Activated naive CD4-positive, alpha-beta T cell treated with anti-CD3 and anti-CD28 coated beads for 36 hours (primary cell): ENCODE measurements at regions of chr14 and their contacts with region 1.

Region 1: DNA sequence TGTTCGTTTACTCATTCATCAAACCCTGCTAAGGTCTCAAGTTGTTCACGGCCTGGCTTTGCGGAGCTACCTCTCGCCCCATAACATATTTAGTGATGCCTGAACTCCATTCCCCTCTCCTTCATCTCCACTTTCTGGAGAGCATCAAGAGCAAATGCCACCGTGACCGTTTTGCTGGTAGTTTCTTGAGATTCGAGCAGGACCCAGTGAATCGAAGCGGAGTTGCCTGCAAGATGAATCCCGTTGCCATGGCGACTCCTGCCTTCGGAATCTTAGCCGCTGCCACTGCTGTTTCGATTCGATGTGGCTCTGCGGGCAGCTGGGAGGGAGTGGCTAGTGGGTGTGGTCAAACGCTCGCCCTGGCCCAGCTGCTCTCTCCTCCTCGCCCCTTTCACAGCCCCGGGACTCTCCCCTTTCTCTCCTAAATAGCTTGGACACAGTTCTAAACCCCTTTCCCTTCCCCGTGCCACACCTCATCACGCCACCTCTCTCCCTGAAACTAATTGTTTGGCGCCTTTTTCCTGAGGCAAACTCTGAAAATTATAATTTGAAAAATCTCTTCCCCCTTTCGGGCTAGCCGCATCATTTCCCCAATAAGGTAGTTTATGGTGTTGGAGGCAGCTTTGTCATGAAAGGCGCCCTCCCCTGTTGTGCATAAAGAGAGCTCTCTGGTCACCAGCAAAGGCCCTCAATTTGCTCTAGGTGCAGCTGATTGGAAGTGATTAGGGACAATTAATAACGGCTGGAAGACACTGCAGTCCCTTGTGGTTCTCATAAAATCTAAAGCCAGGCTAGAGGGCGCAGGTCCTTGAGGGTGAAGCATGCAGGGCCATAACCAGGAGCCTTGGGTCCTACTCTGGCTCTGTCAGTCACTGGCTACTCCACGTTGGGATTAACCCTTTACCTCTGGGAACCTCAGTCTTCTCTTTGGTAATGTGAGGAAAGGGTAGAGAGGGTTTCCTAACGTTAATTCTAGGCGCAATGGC is 1.6 kb downstream of the DAAM1 start:
- DNase-seq: peak; percentile 77
- H3K4me3 Mint-ChIP-seq: peak overlapping the region; percentile 91
- H3K27ac Mint-ChIP-seq: no peak overlapping the region
- H3K4me1 Mint-ChIP-seq: peaks cover 13% of the 10 kb centered on the region
- H3K27me3 Mint-ChIP-seq: no peaks in the 10 kb centered on the region

Region 2: DNA sequence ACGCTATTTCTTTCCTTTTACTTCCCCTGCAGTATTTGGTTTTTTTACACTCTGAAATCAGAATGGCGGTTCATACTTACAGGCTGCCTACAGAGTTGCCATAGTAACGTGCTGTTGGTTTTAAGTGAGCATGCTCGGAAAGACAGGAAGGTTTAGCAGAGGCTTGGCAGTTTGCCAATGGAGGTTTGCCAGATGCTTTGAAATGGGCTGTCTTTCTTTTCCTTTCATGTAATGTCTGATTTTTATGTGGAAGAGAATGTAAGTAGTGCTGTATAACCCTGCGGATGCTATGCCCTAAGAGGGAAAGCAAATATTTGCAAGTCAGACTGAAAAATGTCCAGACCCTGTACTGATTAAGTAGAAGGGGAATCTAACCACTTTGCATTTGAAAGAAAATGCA is 859.0 kb before region 1 on chr14:
- CTCF ChIA-PET with region 1: no interaction called
- intact Hi-C with region 1: loop called (anchors 5 kb)
- DNase-seq: peak; percentile 95
- H3K4me3 Mint-ChIP-seq: peak overlapping the region; percentile 73
- H3K27ac Mint-ChIP-seq: peak overlapping the region; percentile 83
- H3K4me1 Mint-ChIP-seq: peaks cover 20% of the 10 kb centered on the region
- H3K27me3 Mint-ChIP-seq: no peaks in the 10 kb centered on the region

Region 3: DNA sequence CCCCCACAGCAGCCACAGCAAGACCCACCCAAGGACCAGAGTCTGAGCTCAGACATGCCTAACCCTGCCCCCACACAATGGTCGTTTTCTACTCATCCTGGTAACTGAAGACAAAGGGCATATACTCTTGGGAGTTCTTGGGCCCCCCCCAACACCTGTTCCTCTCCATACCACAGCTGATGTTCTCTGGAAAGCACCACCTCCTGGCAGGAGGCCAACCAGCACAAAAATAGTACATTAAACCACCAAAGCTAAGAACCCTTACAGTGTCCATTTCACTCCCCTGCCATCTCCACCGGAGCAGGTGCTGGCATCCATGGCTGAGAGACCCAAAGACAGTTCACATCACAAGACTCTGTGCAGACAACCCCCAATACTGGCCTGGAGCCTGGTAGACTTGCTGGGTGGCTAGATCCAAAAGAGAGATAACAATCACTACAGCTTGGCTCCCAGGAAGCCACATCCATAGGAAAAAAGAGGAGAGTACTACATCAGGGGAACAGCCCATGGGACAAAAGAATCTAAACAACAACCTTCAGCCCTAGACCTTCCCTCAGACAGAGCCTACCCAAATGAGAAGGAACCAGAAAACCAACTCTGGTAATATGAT is 82.2 kb before region 1 on chr14:
- CTCF ChIA-PET with region 1: no interaction called
- intact Hi-C with region 1: no loop called
- DNase-seq: no peak
- H3K4me3 Mint-ChIP-seq: no peak overlapping the region
- H3K27ac Mint-ChIP-seq: no peak overlapping the region
- H3K4me1 Mint-ChIP-seq: no peaks in the 10 kb centered on the region
- H3K27me3 Mint-ChIP-seq: peaks cover 13% of the 10 kb centered on the region

Region 4: DNA sequence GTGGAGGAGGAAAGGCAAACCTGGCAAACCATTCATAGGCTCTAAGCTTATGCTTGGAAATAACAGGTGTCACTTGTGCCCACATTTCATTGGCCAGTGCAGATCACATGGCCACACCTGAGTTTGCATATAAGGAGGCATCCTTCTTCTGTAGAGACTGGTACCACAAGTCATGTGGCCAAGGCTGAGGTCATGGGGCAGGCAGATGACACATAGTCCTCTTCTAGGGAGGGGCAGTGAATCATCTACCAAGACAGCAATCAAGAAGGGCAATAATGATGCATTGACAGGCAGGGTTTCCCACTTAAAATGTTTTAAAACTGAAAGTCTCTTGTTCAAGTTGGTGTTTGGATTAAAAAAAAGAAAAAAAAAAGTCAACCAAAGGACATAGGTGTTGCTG is 75.7 kb after region 1 on chr14:
- CTCF ChIA-PET with region 1: no interaction called
- intact Hi-C with region 1: loop called (anchors 2 kb)
- DNase-seq: peak; percentile 49
- H3K4me3 Mint-ChIP-seq: no peak overlapping the region
- H3K27ac Mint-ChIP-seq: no peak overlapping the region
- H3K4me1 Mint-ChIP-seq: peaks cover 9% of the 10 kb centered on the region
- H3K27me3 Mint-ChIP-seq: no peaks in the 10 kb centered on the region

Region 5: DNA sequence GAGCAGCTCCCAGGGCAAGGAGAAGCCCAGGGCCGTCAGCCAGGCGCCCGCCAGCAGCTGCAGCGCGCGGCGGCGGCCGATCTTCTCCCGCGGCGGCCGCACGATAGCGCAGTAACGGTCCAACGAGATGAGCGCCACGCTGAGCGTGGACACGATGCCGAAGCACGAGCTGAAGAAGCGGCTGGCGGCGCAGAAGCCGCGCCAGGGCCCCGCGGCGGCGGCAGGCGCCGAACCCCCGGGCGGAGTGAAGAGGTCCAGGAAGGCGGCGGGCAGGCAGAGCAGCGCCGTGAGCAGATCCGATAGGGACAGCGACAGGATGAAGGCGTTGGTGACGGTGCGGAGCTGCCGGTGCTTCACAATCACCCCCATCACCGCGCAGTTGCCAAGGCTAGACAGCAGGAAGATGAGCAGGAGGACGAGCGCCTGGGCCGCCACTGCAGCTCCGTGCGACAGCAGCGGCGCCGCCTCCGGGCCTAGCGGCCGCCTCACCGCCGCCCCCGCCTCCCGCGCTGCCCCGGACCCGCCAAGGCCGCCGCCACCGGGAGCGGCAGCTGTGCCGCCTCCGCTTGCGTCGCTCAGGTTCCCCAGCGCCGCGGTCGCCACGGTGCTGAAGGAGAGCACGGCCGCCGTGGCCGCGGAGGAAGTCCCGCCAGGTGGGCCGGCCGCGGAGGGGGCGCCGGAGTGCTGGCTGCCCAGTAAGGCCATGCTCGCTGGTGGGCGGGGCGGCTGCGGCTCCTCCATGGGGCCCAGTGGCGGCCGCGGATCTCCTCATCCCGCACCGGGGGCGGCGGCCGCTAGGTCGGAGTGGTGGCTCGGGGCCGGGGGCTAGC is 274.6 kb after region 1 on chr14:
- CTCF ChIA-PET with region 1: interaction called, 3 read pairs
- intact Hi-C with region 1: loop called (anchors 1 kb)
- DNase-seq: peak; percentile 64
- H3K4me3 Mint-ChIP-seq: peak overlapping the region; percentile 80
- H3K27ac Mint-ChIP-seq: no peak overlapping the region
- H3K4me1 Mint-ChIP-seq: peaks cover 7% of the 10 kb centered on the region
- H3K27me3 Mint-ChIP-seq: peaks cover 8% of the 10 kb centered on the region

Region 6: DNA sequence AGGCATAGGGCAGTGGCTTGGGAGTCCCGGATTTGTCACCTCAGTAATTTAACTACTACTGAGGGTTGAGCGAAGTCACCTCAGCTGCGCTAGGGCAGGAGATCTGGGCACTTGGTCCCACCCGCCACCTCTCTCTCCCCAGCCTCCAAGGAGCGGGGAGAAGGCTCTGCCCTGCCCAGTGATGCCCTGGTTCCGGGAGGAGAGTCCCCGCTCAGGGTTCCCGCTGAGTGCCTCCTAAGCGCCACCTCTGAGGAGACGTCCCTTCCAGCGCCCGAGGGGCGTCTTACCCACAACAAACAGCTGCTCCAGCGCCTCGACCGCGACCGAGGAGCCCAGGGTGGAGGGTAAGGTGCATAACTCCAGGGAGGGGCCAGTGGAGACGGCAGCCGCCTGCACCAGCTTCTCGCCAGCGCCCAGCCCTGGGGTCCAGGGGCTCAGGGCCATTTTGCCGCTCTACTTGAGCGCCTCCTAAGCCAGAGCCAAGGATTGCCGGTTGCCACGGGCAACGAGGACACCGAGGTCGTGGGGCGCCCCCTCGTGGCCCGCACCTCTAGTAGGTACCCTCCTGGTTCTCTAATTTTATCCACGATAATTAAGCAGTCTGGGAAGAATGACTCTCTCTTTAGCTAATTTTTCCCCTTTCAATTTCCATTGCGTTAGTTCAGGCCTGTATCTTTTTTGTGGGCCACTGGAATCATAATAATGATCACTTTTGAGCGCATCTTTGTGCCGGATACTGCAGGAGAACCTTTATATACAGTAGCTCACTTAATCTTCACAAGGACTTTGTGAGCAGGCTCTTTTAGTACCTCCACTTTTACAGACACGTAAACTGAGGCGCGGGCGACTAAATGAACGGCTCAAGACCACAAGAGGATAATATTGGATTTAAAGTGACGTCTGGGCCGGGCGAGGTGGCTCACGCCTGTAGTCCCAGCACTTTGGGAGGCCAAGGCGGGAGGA is 386.5 kb after region 1 on chr14 and contains the start of gene CCDC175:
- CTCF ChIA-PET with region 1: no interaction called
- intact Hi-C with region 1: loop called (anchors 1 kb)
- DNase-seq: peak; percentile 89
- H3K4me3 Mint-ChIP-seq: peak within 1 kb of the TSS; percentile 65
- H3K27ac Mint-ChIP-seq: no peak within 1 kb of the TSS
- H3K4me1 Mint-ChIP-seq: peaks cover 5% of the 10 kb centered on the region
- H3K27me3 Mint-ChIP-seq: peaks cover 3% of the 10 kb centered on the region
- total RNA-seq, gene CCDC175: not detected

Region 7: GRCh38 chr14:60151715-60152114 is 961.6 kb after region 1 on chr14:
- CTCF ChIA-PET with region 1: no interaction called
- intact Hi-C with region 1: loop called (anchors 10 kb)
- DNase-seq: peak; percentile 87
- H3K4me3 Mint-ChIP-seq: no peak overlapping the region
- H3K27ac Mint-ChIP-seq: peak overlapping the region; percentile 86
- H3K4me1 Mint-ChIP-seq: peaks cover 30% of the 10 kb centered on the region
- H3K27me3 Mint-ChIP-seq: no peaks in the 10 kb centered on the region